Mammary epithelial cell (primary cell): ENCODE measurements at regions of chr13 and their contacts with region 1.

Region 1: DNA sequence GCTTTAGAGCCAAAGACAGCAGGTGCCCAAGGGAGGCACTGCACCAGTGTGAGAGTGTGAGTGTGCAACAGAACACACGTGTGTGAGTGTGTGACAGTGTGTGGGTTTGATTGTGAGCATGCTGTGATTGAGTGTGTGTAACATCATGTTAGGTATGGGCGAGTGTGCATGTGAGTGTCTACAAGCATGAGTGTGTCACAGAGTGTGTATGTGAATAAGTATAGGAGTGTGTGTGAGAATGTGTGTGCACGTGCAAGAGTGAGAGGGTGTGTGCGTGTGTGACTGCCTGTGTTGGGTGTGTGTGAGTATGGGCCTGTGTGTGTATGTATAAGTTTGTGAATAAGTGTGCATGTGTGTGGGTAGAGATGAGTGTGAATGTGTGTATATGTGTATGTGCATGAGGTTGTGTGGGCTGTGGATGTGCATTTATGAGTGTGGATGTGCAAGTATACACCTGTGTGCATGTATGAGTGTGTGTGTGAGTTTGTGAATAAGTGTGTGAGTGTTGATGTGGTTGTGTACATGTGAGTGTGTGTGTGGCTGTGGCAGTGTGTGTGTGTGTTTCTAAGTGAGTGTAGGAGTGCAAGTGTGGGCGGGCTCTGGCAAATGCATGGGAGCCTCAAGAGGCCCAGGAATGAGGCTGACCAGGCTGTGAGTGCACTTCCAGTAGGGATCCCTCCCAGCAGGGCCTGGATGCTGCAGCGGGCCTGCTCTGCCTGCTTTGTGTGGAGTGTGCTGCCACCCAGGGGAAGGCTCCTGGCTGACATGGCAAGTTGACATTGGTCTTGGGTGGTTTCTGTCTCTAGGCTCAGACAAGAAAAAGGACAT is 198.4 kb downstream of the COL4A1 start:
- DNase-seq: peak; percentile 78
- H3K4me3 ChIP-seq: no peak overlapping the region
- H3K27ac ChIP-seq: no peak overlapping the region
- H3K4me1 ChIP-seq: peaks cover 29% of the 10 kb centered on the region
- H3K27me3 ChIP-seq: no peaks in the 10 kb centered on the region
- CTCF ChIP-seq: peak; percentile 89 to 93

Region 2: DNA sequence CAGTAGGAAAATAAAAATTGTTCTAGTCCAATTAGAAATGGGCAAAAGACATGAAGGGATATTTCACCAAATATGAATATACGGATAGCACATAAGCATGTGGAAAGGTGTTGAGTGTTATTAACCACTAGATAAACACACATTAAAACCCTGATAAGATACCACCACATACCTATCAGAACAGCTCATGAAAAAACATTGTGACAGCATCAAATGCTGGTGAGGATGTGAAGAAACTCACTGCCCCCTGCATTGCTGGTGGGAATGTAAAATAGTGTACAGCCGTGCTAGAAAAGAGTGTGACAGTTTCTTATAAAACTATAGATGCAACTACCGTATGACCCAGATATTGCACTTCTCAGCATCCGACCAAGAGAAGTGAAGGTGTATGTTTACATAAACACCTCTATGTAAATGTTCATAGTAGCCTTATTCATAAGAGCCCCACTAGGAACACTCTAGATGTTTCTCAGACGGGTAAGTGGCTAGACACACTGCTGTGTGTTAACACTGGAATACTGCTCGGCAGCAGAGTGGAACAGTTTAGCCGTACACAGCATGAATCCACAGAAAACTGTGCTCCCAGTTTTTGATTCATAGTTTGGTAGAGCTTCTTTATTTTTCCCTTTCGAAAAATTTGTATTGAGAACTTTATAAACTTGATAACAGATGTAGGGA is 1158.1 kb before region 1 on chr13:
- CTCF ChIA-PET with region 1: no interaction called
- dilution Hi-C with region 1: loop called (anchors 5 kb)
- in situ Hi-C with region 1: no loop called
- intact Hi-C with region 1: no loop called
- DNase-seq: no peak
- H3K4me3 ChIP-seq: no peak overlapping the region
- H3K27ac ChIP-seq: no peak overlapping the region
- H3K4me1 ChIP-seq: no peaks in the 10 kb centered on the region
- H3K27me3 ChIP-seq: no peaks in the 10 kb centered on the region
- CTCF ChIP-seq: no peak

Region 3: DNA sequence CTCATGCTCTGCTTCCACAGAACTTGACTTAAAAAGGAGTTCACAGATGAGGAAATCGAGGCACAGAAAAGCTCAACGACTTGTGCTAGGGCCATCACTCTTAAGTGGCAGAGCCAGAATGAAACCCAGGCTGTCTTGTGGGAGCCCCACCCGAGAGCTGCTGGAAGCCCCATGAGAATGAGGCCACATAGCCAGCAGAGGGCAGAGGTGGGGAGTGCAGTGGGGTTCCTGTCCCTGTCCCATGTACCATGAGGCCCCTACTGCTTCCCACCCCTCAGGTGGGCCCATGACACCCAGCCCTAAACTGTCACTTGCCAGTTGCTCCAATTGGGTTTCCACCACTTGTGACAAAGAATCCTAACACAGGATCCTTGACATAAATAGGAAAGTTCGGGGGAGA is 498.0 kb before region 1 on chr13:
- CTCF ChIA-PET with region 1: no interaction called
- dilution Hi-C with region 1: no loop called
- in situ Hi-C with region 1: loop called in 1 of 2 experiments (anchors 25 kb)
- intact Hi-C with region 1: loop called (anchors 5 kb)
- DNase-seq: no peak
- H3K4me3 ChIP-seq: no peak overlapping the region
- H3K27ac ChIP-seq: no peak overlapping the region
- H3K4me1 ChIP-seq: no peaks in the 10 kb centered on the region
- H3K27me3 ChIP-seq: no peaks in the 10 kb centered on the region
- CTCF ChIP-seq: peak; percentile 22 to 51

Region 4: GRCh38 chr13:109786457-109787134 is 322.0 kb before region 1 on chr13 and contains the start of gene IRS2:
- CTCF ChIA-PET with region 1: interaction called, 3 read pairs
- dilution Hi-C with region 1: no loop called
- in situ Hi-C with region 1: loop called in 1 of 2 experiments (anchors 5 kb)
- intact Hi-C with region 1: loop called (anchors 10 kb)
- DNase-seq: peak; percentile 90
- H3K4me3 ChIP-seq: peak within 1 kb of the TSS; percentile 81
- H3K27ac ChIP-seq: peak within 1 kb of the TSS; percentile 78
- H3K4me1 ChIP-seq: peaks cover 41% of the 10 kb centered on the region
- H3K27me3 ChIP-seq: no peaks in the 10 kb centered on the region
- CTCF ChIP-seq: no peak
- total RNA-seq, gene IRS2: 22.7 to 37.8 TPM

Region 5: GRCh38 chr13:109998726-109999533 is 109.6 kb before region 1 on chr13:
- CTCF ChIA-PET with region 1: no interaction called
- dilution Hi-C with region 1: loop called (anchors 5 kb)
- in situ Hi-C with region 1: no loop called
- intact Hi-C with region 1: no loop called
- DNase-seq: peak; percentile 97
- H3K4me3 ChIP-seq: no peak overlapping the region
- H3K27ac ChIP-seq: peak overlapping the region; percentile 59
- H3K4me1 ChIP-seq: peaks cover 42% of the 10 kb centered on the region
- H3K27me3 ChIP-seq: no peaks in the 10 kb centered on the region
- CTCF ChIP-seq: peak; percentile 8 to 35